PC-3 (cell line): ENCODE measurements at regions of chr1 and their contacts with region 1.

Region 1: GRCh38 chr1:153677718-153678505 is 576 bp upstream of the NPR1 start:
- DNase-seq: peak; percentile 70
- ATAC-seq: peak; percentile 73
- H3K4me3 ChIP-seq: peak overlapping the region; percentile 67
- H3K27ac ChIP-seq: no peak overlapping the region
- H3K4me1 ChIP-seq: peaks cover 12% of the 10 kb centered on the region
- H3K27me3 ChIP-seq: peaks cover 16% of the 10 kb centered on the region
- CTCF ChIP-seq: peak; percentile 99

Region 2: GRCh38 chr1:153734396-153735089 is 56.6 kb after region 1 on chr1:
- CTCF ChIA-PET with region 1: no interaction called
- POLR2A ChIA-PET with region 1: no interaction called
- intact Hi-C with region 1: loop called (anchors 2 kb)
- DNase-seq: no peak
- ATAC-seq: no peak
- H3K4me3 ChIP-seq: no peak overlapping the region
- H3K27ac ChIP-seq: peak overlapping the region; percentile 91
- H3K4me1 ChIP-seq: peaks cover 40% of the 10 kb centered on the region
- H3K27me3 ChIP-seq: no peaks in the 10 kb centered on the region
- CTCF ChIP-seq: no peak

Region 3: GRCh38 chr1:153749408-153750005 is 71.6 kb after region 1 on chr1:
- CTCF ChIA-PET with region 1: interaction called, 3 read pairs
- POLR2A ChIA-PET with region 1: no interaction called
- intact Hi-C with region 1: loop called (anchors 1 kb)
- DNase-seq: peak; percentile 92
- ATAC-seq: peak; percentile 100
- H3K4me3 ChIP-seq: no peak overlapping the region
- H3K27ac ChIP-seq: no peak overlapping the region
- H3K4me1 ChIP-seq: no peaks in the 10 kb centered on the region
- H3K27me3 ChIP-seq: no peaks in the 10 kb centered on the region
- CTCF ChIP-seq: peak; percentile 99

Region 4: DNA sequence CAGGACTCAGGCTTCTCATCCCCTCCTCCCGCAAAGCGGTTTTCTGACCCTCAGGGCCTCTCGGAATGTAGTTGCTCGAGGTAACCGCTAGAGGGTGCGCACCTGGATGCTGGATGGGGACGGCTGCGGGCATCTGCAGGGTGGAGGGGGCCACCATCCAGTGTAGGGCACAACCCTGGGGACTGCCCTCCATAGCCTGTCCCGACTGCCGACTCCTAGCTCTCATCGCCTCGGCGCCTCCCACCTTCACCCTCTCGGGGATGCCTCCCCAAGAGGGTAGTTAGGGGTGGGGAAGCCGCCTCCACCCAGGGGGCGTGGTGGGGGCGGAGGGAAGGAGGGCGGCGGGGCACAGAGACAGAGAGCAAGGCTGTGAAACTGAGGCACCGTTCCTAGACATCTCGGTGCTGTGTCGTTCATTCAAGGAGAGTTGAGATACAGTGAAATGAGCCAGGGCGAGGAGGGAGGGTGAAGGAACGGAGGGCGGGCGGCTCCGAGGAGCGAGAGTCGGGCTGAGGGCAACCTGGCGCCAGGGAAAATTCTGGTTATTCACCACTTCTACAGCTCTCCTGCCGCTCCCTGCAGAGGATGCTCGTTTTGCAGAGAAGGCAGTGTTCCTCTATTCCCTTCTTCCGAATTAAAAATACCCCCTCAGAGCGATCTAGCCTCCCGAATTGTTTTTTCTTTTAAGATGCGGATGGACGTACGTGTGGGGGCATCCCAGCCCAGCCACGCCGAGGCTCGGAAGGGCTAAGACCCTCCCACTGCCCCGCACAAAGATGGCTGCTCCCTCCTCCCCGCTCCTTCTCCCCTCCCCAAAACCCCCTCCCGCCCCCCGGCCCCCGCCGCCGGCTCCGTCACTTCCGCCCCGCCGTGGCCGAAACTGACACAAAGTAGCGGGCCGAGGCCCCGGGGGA is 647.0 kb after region 1 on chr1 and contains the start of gene ATP8B2:
- CTCF ChIA-PET with region 1: no interaction called
- POLR2A ChIA-PET with region 1: interaction called, 10 read pairs
- intact Hi-C with region 1: no loop called
- DNase-seq: peak; percentile 92
- ATAC-seq: peak; percentile 40
- H3K4me3 ChIP-seq: peak within 1 kb of the TSS; percentile 79
- H3K27ac ChIP-seq: peak within 1 kb of the TSS; percentile 76
- H3K4me1 ChIP-seq: peaks cover 25% of the 10 kb centered on the region
- H3K27me3 ChIP-seq: peaks cover 14% of the 10 kb centered on the region; the same call in 1 of the 2 replicates
- CTCF ChIP-seq: peak; percentile 97
- total RNA-seq, gene ATP8B2: 25.7 and 36.3 TPM in 2 replicates